GM12878 (cell line): ENCODE measurements at regions of chr6 and their contacts with region 1.

Region 1: DNA sequence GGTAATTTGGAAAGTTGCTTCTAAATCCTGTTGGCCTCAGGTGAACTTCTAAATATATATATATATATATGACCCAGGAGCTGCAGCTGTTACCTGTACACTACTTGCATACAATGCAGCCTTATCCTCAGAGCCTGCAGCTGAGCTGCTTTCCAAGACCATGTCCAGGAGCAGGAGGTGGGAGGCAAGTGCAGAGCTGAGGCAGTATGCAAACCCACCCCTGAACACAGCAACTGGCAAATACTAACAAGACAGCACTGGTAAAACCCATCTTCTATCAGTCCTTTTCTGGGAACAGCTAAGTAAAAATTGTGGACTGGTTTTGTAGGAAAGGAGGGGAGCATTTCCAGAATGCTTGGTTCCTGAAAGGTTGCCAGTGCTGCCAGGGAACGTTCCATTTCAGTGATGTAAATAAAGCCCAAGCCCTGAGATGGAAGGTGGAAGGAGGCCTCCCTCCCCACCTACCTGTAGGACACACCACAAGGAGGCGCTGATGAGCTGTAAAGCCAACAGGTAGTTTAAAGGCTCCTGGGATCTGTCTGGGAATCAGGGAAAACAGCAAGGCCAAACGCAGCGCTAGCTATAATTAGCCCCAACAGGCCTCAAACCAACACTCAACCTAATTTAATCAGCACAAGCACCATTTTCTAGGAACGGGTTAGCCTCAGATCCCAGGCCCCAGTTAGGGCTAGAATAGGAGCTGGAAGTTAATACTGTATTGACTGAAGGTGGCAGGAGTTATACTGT is 93.8 kb upstream of the MAP7 start:
- DNase-seq: peak; percentile 40
- ATAC-seq: peak; percentile 90
- H3K4me3 ChIP-seq: no peak overlapping the region
- H3K27ac ChIP-seq: no peak overlapping the region
- H3K4me1 ChIP-seq: no peaks in the 10 kb centered on the region
- H3K27me3 ChIP-seq: no peaks in the 10 kb centered on the region
- CTCF ChIP-seq: peak; percentile 85 to 92 (median 87)
- EP300 ChIP-seq: no peak
- POLR2A ChIP-seq: no peak
- RAD21 ChIP-seq: peak; percentile 97

Region 2: DNA sequence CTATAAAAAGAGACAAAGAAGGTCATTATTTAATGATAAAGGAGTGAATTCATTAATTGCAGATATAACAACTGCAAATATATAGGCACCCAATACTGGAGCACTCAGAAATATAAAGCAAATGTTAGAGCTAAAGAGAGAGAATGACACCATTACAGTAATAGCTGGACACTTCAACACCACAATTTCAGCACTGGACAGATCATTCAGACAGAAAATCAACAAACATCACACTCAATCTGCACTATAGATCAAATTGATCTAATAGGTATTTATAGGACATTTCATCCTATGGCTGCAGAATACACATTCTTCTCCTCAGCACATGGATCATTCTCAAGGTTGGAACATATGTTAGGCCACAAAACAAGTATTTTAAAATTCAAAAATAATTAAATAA is 166.5 kb before region 1 on chr6:
- CTCF ChIA-PET with region 1: no interaction called
- POLR2A ChIA-PET with region 1: no interaction called
- RAD21 ChIA-PET with region 1: no interaction called
- SMC1A ChIA-PET with region 1: no interaction called
- in situ Hi-C with region 1: no loop called
- intact Hi-C with region 1: no loop called
- DNase-seq: no peak
- ATAC-seq: no peak
- H3K4me3 ChIP-seq: no peak overlapping the region
- H3K27ac ChIP-seq: no peak overlapping the region
- H3K4me1 ChIP-seq: no peaks in the 10 kb centered on the region
- H3K27me3 ChIP-seq: no peaks in the 10 kb centered on the region
- CTCF ChIP-seq: no peak
- EP300 ChIP-seq: no peak
- POLR2A ChIP-seq: no peak
- RAD21 ChIP-seq: no peak

Region 3: DNA sequence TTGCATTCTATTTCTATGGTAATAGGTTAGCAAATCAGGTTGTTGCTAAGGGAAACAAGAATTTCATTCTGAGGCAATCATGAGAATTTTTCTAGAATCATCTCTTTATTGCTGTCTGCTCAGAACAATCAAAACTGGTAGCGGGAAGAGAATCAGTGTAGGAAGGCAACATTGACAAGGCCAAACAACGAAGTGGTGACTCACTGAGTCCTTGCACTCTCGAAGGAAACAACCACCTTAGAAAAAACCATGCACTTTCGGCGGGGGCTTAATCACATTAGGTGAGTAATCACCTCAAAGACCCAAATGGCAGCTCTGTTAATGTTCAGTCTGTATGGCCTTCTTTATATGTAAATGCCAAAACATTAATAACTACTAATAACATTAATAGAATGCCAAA is 15.0 kb before region 1 on chr6:
- CTCF ChIA-PET with region 1: interaction called, 77 read pairs
- POLR2A ChIA-PET with region 1: interaction called, 3 read pairs
- RAD21 ChIA-PET with region 1: no interaction called
- SMC1A ChIA-PET with region 1: interaction called, 15 read pairs
- in situ Hi-C with region 1: no loop called
- intact Hi-C with region 1: no loop called
- DNase-seq: no peak
- ATAC-seq: no peak
- H3K4me3 ChIP-seq: no peak overlapping the region
- H3K27ac ChIP-seq: no peak overlapping the region
- H3K4me1 ChIP-seq: no peaks in the 10 kb centered on the region
- H3K27me3 ChIP-seq: no peaks in the 10 kb centered on the region
- CTCF ChIP-seq: no peak
- EP300 ChIP-seq: no peak
- POLR2A ChIP-seq: no peak
- RAD21 ChIP-seq: no peak

Region 4: GRCh38 chr6:136685540-136686108 is 41.6 kb after region 1 on chr6:
- CTCF ChIA-PET with region 1: interaction called, 48 read pairs
- POLR2A ChIA-PET with region 1: interaction called, 3 read pairs
- RAD21 ChIA-PET with region 1: interaction called, 4 read pairs
- SMC1A ChIA-PET with region 1: interaction called, 12 read pairs
- in situ Hi-C with region 1: no loop called
- intact Hi-C with region 1: no loop called
- DNase-seq: no peak
- ATAC-seq: no peak
- H3K4me3 ChIP-seq: no peak overlapping the region
- H3K27ac ChIP-seq: no peak overlapping the region
- H3K4me1 ChIP-seq: no peaks in the 10 kb centered on the region
- H3K27me3 ChIP-seq: no peaks in the 10 kb centered on the region
- CTCF ChIP-seq: no peak
- EP300 ChIP-seq: no peak
- POLR2A ChIP-seq: no peak
- RAD21 ChIP-seq: no peak

Region 5: GRCh38 chr6:136723780-136724179 is 79.8 kb after region 1 on chr6:
- CTCF ChIA-PET with region 1: interaction called, 46 read pairs
- POLR2A ChIA-PET with region 1: interaction called, 4 read pairs
- RAD21 ChIA-PET with region 1: interaction called, 56 read pairs
- SMC1A ChIA-PET with region 1: interaction called, 77 read pairs
- in situ Hi-C with region 1: no loop called
- intact Hi-C with region 1: no loop called
- DNase-seq: peak; percentile 53
- ATAC-seq: peak; percentile 64
- H3K4me3 ChIP-seq: no peak overlapping the region
- H3K27ac ChIP-seq: peak overlapping the region; percentile 30
- H3K4me1 ChIP-seq: peaks cover 20% of the 10 kb centered on the region
- H3K27me3 ChIP-seq: no peaks in the 10 kb centered on the region
- CTCF ChIP-seq: no peak
- EP300 ChIP-seq: no peak
- POLR2A ChIP-seq: no peak
- RAD21 ChIP-seq: no peak

Region 6: GRCh38 chr6:136761227-136761922 is 117.4 kb after region 1 on chr6:
- CTCF ChIA-PET with region 1: interaction called, 43 read pairs
- POLR2A ChIA-PET with region 1: interaction called, 4 read pairs
- RAD21 ChIA-PET with region 1: interaction called, 26 read pairs
- SMC1A ChIA-PET with region 1: interaction called, 54 read pairs
- in situ Hi-C with region 1: no loop called
- intact Hi-C with region 1: no loop called
- DNase-seq: no peak
- ATAC-seq: peak; percentile 25
- H3K4me3 ChIP-seq: peak overlapping the region; percentile 61
- H3K27ac ChIP-seq: peak overlapping the region; percentile 97
- H3K4me1 ChIP-seq: peaks cover 61% of the 10 kb centered on the region
- H3K27me3 ChIP-seq: no peaks in the 10 kb centered on the region
- CTCF ChIP-seq: no peak
- EP300 ChIP-seq: 0 out of 4 replicates have a peak, but pooled peaks of 1 of the 2 experiments have one; percentile 33
- POLR2A ChIP-seq: 0 out of 2 replicates have a peak, but pooled peaks have one; percentile 32
- RAD21 ChIP-seq: no peak

Region 7: DNA sequence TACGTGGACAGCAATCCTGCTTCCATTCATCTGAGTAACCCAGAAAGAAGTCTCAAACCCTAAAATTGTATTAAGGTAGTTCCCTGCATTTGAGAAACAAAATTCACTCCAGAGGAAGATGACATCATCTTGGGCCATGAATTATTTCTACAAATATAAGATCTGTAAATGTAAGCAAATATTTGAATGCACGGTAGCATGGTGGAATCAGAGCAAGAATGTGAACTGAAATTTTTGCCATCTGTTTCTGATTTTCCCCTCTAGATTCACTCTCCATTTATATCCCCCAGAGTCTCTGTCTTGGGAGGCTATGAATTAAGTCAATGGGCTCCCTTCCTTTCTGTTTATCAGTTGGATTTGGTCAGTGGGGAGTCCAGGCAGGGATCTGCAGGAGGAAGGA is 154.0 kb after region 1 on chr6:
- CTCF ChIA-PET with region 1: interaction called, 411 read pairs
- POLR2A ChIA-PET with region 1: interaction called, 59 read pairs
- RAD21 ChIA-PET with region 1: interaction called, 296 read pairs
- SMC1A ChIA-PET with region 1: interaction called, 275 read pairs
- in situ Hi-C with region 1: loop called (anchors 5 kb)
- intact Hi-C with region 1: loop called (anchors 1 kb)
- DNase-seq: no peak
- ATAC-seq: no peak
- H3K4me3 ChIP-seq: no peak overlapping the region
- H3K27ac ChIP-seq: no peak overlapping the region
- H3K4me1 ChIP-seq: peaks cover 4% of the 10 kb centered on the region
- H3K27me3 ChIP-seq: no peaks in the 10 kb centered on the region
- CTCF ChIP-seq: no peak
- EP300 ChIP-seq: no peak
- POLR2A ChIP-seq: no peak
- RAD21 ChIP-seq: no peak

Region 8: GRCh38 chr6:136927292-136927691 is 283.3 kb after region 1 on chr6:
- CTCF ChIA-PET with region 1: interaction called, 12 read pairs
- POLR2A ChIA-PET with region 1: no interaction called
- RAD21 ChIA-PET with region 1: interaction called, 5 read pairs
- SMC1A ChIA-PET with region 1: interaction called, 4 read pairs
- in situ Hi-C with region 1: no loop called
- intact Hi-C with region 1: loop called (anchors 1 kb)
- DNase-seq: no peak
- ATAC-seq: peak; percentile 87
- H3K4me3 ChIP-seq: no peak overlapping the region
- H3K27ac ChIP-seq: no peak overlapping the region
- H3K4me1 ChIP-seq: no peaks in the 10 kb centered on the region
- H3K27me3 ChIP-seq: peaks cover 13% of the 10 kb centered on the region in 2 experiments
- CTCF ChIP-seq: peak; percentile 50 to 74 (median 55)
- EP300 ChIP-seq: no peak
- POLR2A ChIP-seq: no peak
- RAD21 ChIP-seq: peak; percentile 66

Region 9: GRCh38 chr6:136969433-136969832 is 325.4 kb after region 1 on chr6:
- CTCF ChIA-PET with region 1: no interaction called
- POLR2A ChIA-PET with region 1: no interaction called
- RAD21 ChIA-PET with region 1: no interaction called
- SMC1A ChIA-PET with region 1: no interaction called
- in situ Hi-C with region 1: no loop called
- intact Hi-C with region 1: no loop called
- DNase-seq: no peak
- ATAC-seq: no peak
- H3K4me3 ChIP-seq: no peak overlapping the region
- H3K27ac ChIP-seq: no peak overlapping the region
- H3K4me1 ChIP-seq: no peaks in the 10 kb centered on the region
- H3K27me3 ChIP-seq: no peaks in the 10 kb centered on the region
- CTCF ChIP-seq: no peak
- EP300 ChIP-seq: no peak
- POLR2A ChIP-seq: no peak
- RAD21 ChIP-seq: no peak

Region 10: DNA sequence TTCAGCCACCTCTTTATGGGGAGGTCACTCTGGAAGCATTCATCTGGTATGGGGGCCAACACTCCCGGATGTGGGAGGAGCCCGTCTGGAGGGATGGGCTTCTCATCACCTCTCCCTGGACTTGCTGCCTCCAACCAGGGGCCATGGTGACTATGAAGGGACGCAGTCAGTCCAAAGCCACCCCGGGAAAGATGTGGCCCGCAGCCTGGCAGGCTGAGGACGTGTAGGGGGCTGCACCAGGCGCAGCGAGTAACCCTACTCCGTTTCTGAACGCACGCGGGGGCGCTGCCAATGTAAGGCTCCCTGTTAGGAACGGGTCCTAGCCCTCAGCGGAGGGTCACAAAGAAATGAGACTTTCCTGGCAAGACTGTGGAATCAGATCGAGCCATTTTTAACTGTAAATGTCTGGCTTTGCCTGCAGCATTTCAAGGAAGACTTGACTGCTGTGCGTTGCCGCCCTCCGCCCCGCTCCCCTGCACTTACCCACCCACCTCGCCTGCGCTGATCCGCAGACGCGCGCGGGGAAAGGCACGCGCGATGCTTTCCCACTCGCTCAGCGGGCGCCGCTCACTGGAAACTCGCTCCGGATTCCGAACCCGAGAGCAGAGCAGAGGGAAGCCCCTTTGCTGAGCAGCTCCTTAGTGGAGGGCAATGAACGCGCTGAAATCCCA is 345.7 kb after region 1 on chr6:
- CTCF ChIA-PET with region 1: no interaction called
- POLR2A ChIA-PET with region 1: no interaction called
- RAD21 ChIA-PET with region 1: no interaction called
- SMC1A ChIA-PET with region 1: no interaction called
- in situ Hi-C with region 1: no loop called
- intact Hi-C with region 1: no loop called
- DNase-seq: no peak
- ATAC-seq: no peak
- H3K4me3 ChIP-seq: no peak overlapping the region
- H3K27ac ChIP-seq: no peak overlapping the region
- H3K4me1 ChIP-seq: no peaks in the 10 kb centered on the region
- H3K27me3 ChIP-seq: peaks cover 1 to 24% of the 10 kb centered on the region in 2 experiments
- CTCF ChIP-seq: no peak
- EP300 ChIP-seq: no peak
- POLR2A ChIP-seq: no peak
- RAD21 ChIP-seq: no peak